ENCODE measurements at regions of chr16 and their contacts with region 1.

Region 1: GRCh38 chr16:87540945-87541877 is 48.4 kb upstream of the ZCCHC14 start:
- DNase-seq: no peak
- H3K4me3 ChIP-seq: peak overlapping the region in 1 of 2 donors; percentile 16
- H3K27ac ChIP-seq: peak overlapping the region; percentile 76
- H3K4me1 ChIP-seq: peaks cover 16% of the 10 kb centered on the region
- H3K27me3 ChIP-seq: no peaks in the 10 kb centered on the region
- CTCF ChIP-seq: no peak
- POLR2A ChIP-seq: no peak

Region 2: DNA sequence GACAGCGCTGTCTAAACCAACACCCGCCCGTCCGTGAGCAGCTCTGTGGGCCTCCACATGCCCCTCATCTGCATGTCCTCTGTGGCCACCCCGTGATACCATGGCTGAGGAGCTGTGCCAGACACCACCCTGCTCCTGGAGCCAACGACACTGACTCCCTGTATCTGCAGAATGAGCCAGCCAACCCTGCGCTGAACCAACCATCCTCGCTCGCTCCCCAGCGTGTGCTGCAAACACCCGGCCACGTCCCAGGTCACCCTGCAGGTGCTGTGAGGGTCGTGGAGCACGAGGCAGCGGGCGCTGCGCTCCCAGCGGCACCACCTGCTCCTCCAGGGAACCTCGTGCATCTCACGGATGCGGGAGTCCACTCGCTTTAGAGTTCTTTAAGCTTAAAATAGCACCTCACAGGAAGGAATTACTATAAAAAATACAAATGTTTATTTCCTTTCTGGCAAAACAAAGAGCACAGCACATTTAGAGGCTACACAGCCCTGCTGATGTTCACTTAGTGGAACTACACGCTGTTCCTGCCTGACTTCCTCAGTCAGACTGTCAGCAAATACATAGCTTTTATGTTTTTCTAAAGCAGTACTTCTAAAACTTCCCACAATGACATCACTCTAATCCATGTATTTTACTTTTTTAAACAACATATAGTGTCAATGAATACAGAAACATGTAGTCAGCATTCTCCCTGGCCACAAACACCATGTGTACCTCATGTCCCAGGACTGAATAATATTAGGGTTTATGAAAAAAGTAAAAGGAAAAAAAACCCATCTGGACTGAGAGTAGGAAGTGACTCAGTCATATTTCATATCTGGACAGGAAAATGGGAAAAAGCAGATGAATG is 105.6 kb before region 1 on chr16:
- intact Hi-C with region 1: loop called (anchors 10 kb)
- DNase-seq: no peak
- H3K4me3 ChIP-seq: no peak overlapping the region
- H3K27ac ChIP-seq: peak overlapping the region; percentile 35
- H3K4me1 ChIP-seq: peaks cover 25% of the 10 kb centered on the region
- H3K27me3 ChIP-seq: no peaks in the 10 kb centered on the region
- CTCF ChIP-seq: no peak
- POLR2A ChIP-seq: no peak

Region 3: GRCh38 chr16:87507351-87508069 is 33.7 kb before region 1 on chr16:
- intact Hi-C with region 1: no loop called
- DNase-seq: no peak
- H3K4me3 ChIP-seq: no peak overlapping the region
- H3K27ac ChIP-seq: no peak overlapping the region
- H3K4me1 ChIP-seq: no peaks in the 10 kb centered on the region
- H3K27me3 ChIP-seq: no peaks in the 10 kb centered on the region
- CTCF ChIP-seq: no peak
- POLR2A ChIP-seq: no peak

Region 4: GRCh38 chr16:87528690-87529579 is 12.3 kb before region 1 on chr16:
- intact Hi-C with region 1: no loop called
- DNase-seq: no peak
- H3K4me3 ChIP-seq: no peak overlapping the region
- H3K27ac ChIP-seq: no peak overlapping the region
- H3K4me1 ChIP-seq: no peaks in the 10 kb centered on the region
- H3K27me3 ChIP-seq: no peaks in the 10 kb centered on the region
- CTCF ChIP-seq: no peak
- POLR2A ChIP-seq: no peak